ENCODE measurements at regions of chr4 and their contacts with region 1.

Region 1: DNA sequence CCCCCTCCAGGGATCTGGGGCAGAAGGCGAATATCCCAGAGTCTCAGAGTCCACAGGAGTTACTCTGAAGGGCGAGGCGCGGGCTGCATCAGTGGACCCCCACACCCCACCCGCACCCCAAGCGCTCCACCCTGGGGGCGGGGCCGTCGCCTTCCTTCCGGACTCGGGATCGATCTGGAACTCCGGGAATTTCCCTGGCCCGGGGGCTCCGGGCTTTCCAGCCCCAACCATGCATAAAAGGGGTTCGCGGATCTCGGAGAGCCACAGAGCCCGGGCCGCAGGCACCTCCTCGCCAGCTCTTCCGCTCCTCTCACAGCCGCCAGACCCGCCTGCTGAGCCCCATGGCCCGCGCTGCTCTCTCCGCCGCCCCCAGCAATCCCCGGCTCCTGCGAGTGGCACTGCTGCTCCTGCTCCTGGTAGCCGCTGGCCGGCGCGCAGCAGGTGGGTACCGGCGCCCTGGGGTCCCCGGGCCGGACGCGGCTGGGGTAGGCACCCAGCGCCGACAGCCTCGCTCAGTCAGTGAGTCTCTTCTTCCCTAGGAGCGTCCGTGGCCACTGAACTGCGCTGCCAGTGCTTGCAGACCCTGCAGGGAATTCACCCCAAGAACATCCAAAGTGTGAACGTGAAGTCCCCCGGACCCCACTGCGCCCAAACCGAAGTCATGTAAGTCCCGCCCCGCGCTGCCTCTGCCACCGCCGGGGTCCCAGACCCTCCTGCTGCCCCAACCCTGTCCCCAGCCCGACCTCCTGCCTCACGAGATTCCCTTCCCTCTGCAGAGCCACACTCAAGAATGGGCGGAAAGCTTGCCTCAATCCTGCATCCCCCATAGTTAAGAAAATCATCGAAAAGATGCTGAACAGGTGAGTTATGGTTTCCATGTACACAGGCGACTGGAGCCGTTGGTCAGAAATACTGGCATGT is at the start of gene CXCL1:
- DNase-seq: no peak
- H3K4me3 ChIP-seq: peak within 1 kb of the TSS; percentile 45 to 72 (median 54)
- H3K27ac ChIP-seq: peak within 1 kb of the TSS; percentile 59 to 80 (median 64)
- H3K4me1 ChIP-seq: peaks cover 0 to 29% (median 12%) of the 10 kb centered on the region in 3 donors
- H3K27me3 ChIP-seq: peaks cover 0 to 18% (median 0%) of the 10 kb centered on the region in 4 donors
- CTCF ChIP-seq: no peak
- POLR2A ChIP-seq: peak in 2 of 4 donors; percentile 31 to 63
- total RNA-seq, gene CXCL1: 9.5 to 152 (median 50.1) TPM

Region 2: DNA sequence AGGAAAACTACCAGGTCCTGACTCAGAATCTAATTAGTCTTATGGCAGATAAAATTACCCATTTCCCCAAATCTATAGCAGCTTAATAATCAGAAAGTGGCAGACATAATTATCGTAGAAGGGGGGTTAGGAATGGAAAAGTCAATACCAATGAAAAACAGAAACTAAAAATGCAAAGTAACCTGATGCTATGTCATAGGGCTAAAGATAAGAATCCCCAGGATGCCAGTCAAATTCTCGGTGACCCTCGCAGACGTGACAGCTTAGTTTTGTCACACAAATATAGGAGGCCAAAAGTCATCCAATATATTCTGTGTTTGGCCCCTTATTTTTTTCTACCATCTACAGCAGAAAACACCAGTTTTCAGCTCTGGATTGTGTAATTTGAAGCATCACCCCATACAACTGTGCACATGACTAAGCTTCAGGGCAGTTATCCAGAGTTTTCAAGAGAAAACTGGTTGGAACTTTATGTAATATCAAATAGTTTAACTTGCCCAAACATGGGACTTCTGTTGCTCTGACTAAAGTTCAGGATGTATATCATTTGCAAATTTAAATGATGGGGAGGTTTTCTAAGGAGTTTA is 280.0 kb before region 1 on chr4:
- intact Hi-C with region 1: loop called (anchors 10 kb)
- DNase-seq: no peak
- H3K4me3 ChIP-seq: no peak overlapping the region
- H3K27ac ChIP-seq: peak overlapping the region; percentile 44 to 71 (median 64)
- H3K4me1 ChIP-seq: peaks cover 0 to 36% (median 0%) of the 10 kb centered on the region in 3 donors
- H3K27me3 ChIP-seq: no peaks in the 10 kb centered on the region
- CTCF ChIP-seq: no peak
- POLR2A ChIP-seq: no peak

Region 3: DNA sequence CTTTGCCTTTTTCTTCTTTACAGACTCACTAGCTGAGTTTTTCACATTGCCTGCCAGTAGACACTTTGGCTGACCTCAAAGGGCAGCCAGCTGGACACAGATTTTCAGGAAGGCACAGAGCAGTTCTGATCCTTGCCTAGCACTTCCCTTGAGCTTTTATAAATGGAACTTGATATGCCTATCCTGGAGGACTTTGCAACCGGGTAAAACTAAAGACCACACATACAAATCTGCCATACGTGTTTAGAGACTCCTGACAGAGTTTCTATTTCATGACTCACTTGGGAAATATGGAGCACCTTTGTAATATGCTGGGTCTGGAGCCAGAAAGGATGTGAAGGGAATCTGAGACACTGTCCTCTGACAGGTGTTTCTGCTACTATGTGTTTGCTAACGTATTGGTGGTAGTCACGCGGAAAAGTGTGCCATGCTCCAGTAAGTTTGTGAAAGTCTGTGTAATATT is 192.5 kb before region 1 on chr4:
- intact Hi-C with region 1: loop called (anchors 10 kb)
- DNase-seq: no peak
- H3K4me3 ChIP-seq: no peak overlapping the region
- H3K27ac ChIP-seq: peak overlapping the region; percentile 58 to 81 (median 70)
- H3K4me1 ChIP-seq: peaks cover 14 to 70% (median 47%) of the 10 kb centered on the region in 3 donors
- H3K27me3 ChIP-seq: no peaks in the 10 kb centered on the region
- CTCF ChIP-seq: no peak
- POLR2A ChIP-seq: no peak

Region 4: DNA sequence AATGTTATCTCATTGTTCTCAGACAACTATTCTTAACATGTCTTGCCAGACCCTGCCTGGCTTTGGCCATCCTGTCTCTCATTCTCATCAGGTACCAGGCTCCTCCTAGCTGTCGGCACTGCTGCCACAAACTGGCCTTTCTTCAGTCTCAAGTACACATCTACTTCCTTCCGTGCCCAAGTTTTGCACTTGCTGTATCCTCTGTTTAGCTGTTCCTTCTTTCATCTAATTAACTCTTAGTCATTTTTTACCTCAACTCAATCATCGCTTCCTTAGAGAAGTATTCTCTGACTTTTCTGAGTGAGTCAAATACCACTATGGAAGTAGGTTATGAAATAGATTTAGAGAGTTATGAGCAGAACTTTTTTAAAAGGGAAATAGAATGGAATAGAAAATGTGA is 149.4 kb after region 1 on chr4:
- intact Hi-C with region 1: no loop called
- DNase-seq: no peak
- H3K4me3 ChIP-seq: no peak overlapping the region
- H3K27ac ChIP-seq: no peak overlapping the region
- H3K4me1 ChIP-seq: no peaks in the 10 kb centered on the region
- H3K27me3 ChIP-seq: no peaks in the 10 kb centered on the region
- CTCF ChIP-seq: no peak
- POLR2A ChIP-seq: no peak